RWPE1 (cell line): ENCODE measurements at regions of chr11 and their contacts with region 1.

Region 1: GRCh38 chr11:77062924-77063323 is 3.8 kb upstream of the CAPN5 start:
- DNase-seq: no peak
- H3K27ac ChIP-seq: no peak overlapping the region
- CTCF ChIP-seq: no peak

Region 2: GRCh38 chr11:77091146-77091940 is 28.4 kb after region 1 on chr11:
- CTCF ChIA-PET with region 1: interaction called, 11 read pairs
- POLR2A ChIA-PET with region 1: no interaction called
- DNase-seq: peak; percentile 80
- H3K27ac ChIP-seq: no peak overlapping the region
- CTCF ChIP-seq: peak; percentile 91